ENCODE measurements at regions of chr3 and their contacts with region 1.

Region 1: GRCh38 chr3:122942937-122943827 is 84.4 kb downstream of the SEMA5B start:
- DNase-seq: peak; percentile 13 to 37
- ATAC-seq: peak; percentile 53 to 78
- H3K4me3 ChIP-seq: no peak overlapping the region
- H3K27ac ChIP-seq: no peak overlapping the region
- H3K4me1 ChIP-seq: no peaks in the 10 kb centered on the region
- H3K27me3 ChIP-seq: no peaks in the 10 kb centered on the region
- CTCF ChIP-seq: peak; percentile 73 to 85 (median 80)
- POLR2A ChIP-seq: no peak

Region 2: DNA sequence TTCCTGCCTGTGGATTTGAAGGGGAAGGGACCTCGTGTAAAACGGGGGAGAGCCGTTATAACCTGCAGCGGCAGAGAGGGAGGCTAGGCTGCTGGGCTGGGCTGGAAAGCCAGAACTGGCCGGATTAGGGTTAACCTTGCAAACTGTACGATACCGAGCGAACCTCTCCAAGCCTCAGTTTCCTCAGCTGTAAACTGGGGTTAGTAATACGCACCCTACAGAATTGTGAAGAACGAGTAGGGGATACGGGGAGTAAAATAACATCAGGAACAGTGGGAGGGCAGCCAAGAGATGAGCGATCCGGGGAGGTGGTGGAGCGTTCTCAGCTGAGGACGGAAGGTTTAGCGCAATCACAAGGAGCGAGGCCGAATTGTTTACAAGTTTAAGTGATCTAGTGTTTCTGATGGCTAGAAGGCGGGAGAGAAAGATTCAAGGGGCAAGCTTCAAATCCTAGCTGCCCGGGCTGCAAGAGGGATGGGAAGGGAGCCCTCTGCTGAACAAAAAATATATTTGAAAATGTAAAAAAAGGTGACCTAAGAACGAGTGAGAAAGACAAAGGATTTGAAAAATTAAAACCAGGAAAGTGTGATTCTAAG is 85.1 kb after region 1 on chr3:
- in situ Hi-C with region 1: no loop called
- intact Hi-C with region 1: loop called (anchors 1 kb)
- DNase-seq: no peak
- ATAC-seq: peak; percentile 53 to 55
- H3K4me3 ChIP-seq: peak overlapping the region; percentile 57 to 66 (median 64)
- H3K27ac ChIP-seq: peak overlapping the region in 1 of 4 donors; percentile 32
- H3K4me1 ChIP-seq: peaks cover 16 to 23% of the 10 kb centered on the region in 2 donors
- H3K27me3 ChIP-seq: peaks cover 43 to 65% (median 48%) of the 10 kb centered on the region in 3 donors
- CTCF ChIP-seq: peak in 2 of 5 experiments; percentile 22 to 28
- POLR2A ChIP-seq: no peak